AG04450 (cell line): ENCODE measurements at regions of chr2 and their contacts with region 1.

Region 1: GRCh38 chr2:76599732-76600368 is 889.1 kb upstream of the GCFC2 start:
- DNase-seq: peak; percentile 20
- H3K4me3 ChIP-seq: no peak overlapping the region
- H3K27ac ChIP-seq: no peak overlapping the region
- H3K27me3 ChIP-seq: no peaks in the 10 kb centered on the region
- CTCF ChIP-seq: peak; percentile 75

Region 2: DNA sequence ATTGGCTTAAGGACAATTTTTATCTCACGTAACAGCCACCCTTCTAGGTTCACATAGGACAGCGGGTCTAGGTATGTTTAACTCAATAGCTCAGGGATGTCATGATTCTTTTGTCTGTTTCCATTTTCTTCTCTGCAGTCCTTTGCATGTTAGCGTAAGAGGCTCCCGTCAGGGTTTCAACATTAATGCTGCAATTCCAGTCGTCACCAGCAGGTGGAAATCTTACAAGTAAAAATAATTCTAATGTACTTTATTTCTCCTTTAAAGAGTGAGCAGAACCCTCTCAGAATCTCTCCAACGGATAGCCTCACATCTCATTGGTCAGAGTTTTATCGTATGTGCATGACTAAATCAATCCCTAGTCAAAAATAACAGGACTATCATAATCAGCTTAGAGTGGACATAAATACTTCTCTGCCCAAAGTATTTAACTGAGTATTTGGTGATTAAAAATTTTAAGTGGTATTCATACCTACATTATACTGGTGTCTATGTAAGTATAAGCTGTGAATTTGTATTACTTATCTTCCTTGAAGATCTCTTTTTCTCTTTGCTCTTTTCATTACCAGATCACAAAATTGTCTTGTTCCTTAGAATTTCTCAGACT is 401.9 kb before region 1 on chr2:
- CTCF ChIA-PET with region 1: interaction called, 35 read pairs
- POLR2A ChIA-PET with region 1: no interaction called
- DNase-seq: peak; percentile 44
- H3K4me3 ChIP-seq: no peak overlapping the region
- H3K27ac ChIP-seq: no peak overlapping the region
- H3K27me3 ChIP-seq: no peaks in the 10 kb centered on the region
- CTCF ChIP-seq: peak; percentile 73

Region 3: DNA sequence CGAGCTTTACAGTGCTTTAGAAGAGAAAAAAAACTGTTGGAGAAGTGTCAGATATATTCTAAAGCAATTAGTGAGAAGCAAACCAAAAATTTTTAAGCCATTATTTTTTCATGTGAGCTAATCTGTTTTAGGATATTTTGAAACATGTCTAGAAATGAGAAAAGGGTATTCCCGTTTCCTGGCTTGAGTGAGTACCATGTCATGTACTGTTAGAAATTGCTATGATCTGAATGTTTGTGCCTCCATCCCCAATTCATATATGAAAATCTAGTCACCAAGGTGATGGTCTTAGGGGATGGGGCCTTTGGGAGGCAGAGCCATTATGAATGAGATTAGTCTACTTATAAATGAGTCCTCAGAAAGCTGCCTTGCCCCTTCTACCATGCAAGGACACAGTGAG is 395.8 kb before region 1 on chr2:
- CTCF ChIA-PET with region 1: interaction called, 12 read pairs
- POLR2A ChIA-PET with region 1: no interaction called
- DNase-seq: no peak
- H3K4me3 ChIP-seq: no peak overlapping the region
- H3K27ac ChIP-seq: no peak overlapping the region
- H3K27me3 ChIP-seq: no peaks in the 10 kb centered on the region
- CTCF ChIP-seq: no peak

Region 4: DNA sequence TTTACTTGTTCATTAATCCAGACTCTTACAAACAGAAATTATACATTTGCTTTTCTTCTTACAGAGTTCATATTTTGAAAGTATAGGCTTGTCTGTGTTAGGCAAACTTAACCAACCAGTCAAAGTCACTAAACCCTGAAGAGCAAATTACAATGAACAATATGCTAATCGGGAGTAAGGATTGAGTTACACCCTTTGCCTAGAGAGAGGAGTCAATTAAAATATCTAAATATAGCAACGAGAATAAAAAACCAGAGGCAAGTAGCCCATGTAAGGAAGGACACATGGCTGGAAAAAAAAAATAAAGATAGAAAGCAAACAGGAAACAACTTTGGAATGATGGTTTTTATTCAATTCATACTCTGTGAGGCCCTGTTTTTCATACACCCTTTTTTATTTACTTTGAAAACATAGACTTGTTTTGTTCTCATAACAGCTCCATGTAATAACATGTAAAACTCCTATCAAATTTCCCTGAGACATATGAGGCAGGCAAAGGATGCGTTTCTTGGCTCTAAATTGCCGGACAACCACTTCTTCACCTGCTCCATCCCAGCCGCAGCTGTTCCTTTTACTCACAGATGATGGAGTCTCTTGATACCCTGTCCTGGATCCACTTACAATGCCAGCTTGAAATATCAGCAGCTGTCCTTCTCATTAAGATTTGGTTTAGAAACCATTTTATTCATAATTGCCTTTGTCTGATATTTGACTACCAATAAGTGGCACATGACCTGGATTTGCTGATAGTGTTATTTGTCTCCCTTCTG is 121.4 kb before region 1 on chr2:
- CTCF ChIA-PET with region 1: interaction called, 14 read pairs
- POLR2A ChIA-PET with region 1: no interaction called
- DNase-seq: no peak
- H3K4me3 ChIP-seq: no peak overlapping the region
- H3K27ac ChIP-seq: no peak overlapping the region
- H3K27me3 ChIP-seq: no peaks in the 10 kb centered on the region
- CTCF ChIP-seq: no peak

Region 5: DNA sequence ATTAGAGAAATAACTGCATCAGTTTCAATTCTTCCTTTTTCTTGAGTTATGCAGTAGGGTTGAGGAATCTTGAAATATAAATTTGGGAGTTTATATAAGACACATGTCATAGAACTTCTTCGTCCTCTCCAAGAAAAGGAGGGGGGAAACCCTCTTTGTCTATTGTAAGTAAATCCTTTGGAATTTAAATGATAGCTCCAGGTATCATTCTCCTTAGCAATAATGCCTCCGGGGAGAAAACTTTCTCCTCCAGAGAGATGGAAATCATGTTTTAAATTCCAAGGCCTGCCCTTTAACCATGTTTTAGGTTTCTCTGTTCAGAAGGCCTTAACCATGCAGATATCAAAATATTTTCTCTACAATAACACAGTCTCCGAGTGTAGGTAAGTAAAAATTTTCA is 10.6 kb after region 1 on chr2:
- CTCF ChIA-PET with region 1: interaction called, 21 read pairs
- POLR2A ChIA-PET with region 1: no interaction called
- DNase-seq: no peak
- H3K4me3 ChIP-seq: no peak overlapping the region
- H3K27ac ChIP-seq: no peak overlapping the region
- H3K27me3 ChIP-seq: no peaks in the 10 kb centered on the region
- CTCF ChIP-seq: no peak